Activated T-helper 1 cell treated with anti-CD3 and anti-CD28 coated beads, Interleukin-12 subunit alpha, Interleukin-12 subunit beta, Interleukin-2, Interleukin-4 antibody, amounts not matched to agents 30 ng/mL and 10 ng/mL and 1 ng/mL, durations not matched to agents 14 hours and 24 hours and 36 hours (primary cell): ENCODE measurements at regions of chrX and their contacts with region 1.

Region 1: GRCh38 chrX:27186664-27187063 is 276.5 kb downstream of the PPP4R3C start:
- DNase-seq: no peak
- H3K4me3 Mint-ChIP-seq: no peak overlapping the region
- H3K27ac Mint-ChIP-seq: no peak overlapping the region
- H3K4me1 Mint-ChIP-seq: no peaks in the 10 kb centered on the region
- H3K27me3 Mint-ChIP-seq: no peaks in the 10 kb centered on the region

Region 2: GRCh38 chrX:26653050-26653449 is 533.6 kb before region 1 on chrX:
- intact Hi-C with region 1: loop called (anchors 1 kb)
- DNase-seq: no peak
- H3K4me3 Mint-ChIP-seq: no peak overlapping the region
- H3K27ac Mint-ChIP-seq: no peak overlapping the region
- H3K4me1 Mint-ChIP-seq: no peaks in the 10 kb centered on the region
- H3K27me3 Mint-ChIP-seq: no peaks in the 10 kb centered on the region

Region 3: GRCh38 chrX:26783512-26784225 is 403.0 kb before region 1 on chrX:
- intact Hi-C with region 1: loop called (anchors 1 kb)
- DNase-seq: no peak
- H3K4me3 Mint-ChIP-seq: no peak overlapping the region
- H3K27ac Mint-ChIP-seq: no peak overlapping the region
- H3K4me1 Mint-ChIP-seq: no peaks in the 10 kb centered on the region
- H3K27me3 Mint-ChIP-seq: no peaks in the 10 kb centered on the region